ENCODE measurements at regions of chr2 and their contacts with region 1.

Region 1: DNA sequence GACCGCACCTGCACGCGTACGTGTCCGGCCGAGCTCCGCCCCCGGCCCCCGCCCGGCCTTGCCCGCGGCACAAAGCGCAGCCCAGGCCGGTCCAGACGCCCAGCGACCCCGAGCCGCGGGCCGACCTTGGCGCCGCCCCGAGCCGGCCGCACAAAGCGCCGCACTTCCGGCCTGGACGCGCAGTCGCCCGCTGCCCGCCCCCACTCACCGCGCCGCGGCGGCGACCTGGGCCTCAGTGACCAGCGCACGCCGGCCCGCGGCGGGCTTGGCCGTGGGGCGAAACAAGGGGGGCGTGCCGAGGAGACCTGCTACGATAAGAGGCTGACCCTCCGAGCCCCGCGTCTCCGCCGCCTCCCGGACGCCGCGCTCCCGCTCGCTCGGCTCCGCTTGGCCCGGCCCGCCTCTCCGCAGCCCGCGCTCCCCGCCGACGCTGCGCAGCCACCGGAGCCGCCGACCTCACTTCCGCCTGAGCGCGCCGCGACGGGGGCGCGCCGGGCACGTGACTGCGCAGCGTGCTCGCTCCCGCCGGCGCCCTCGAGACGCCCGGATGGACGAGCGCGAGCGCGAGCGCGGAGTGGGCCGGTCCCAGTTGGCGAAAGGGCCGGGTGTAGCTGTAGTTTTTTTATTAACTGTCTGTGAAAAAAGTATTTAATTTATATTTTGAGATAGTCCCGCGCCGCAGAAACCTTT is at the start of gene FAM168B:
- DNase-seq: peak; percentile 82 to 96 (median 88)
- ATAC-seq: peak; percentile 76
- H3K4me3 ChIP-seq: peak within 1 kb of the TSS; percentile 72 to 98
- H3K4me3 Mint-ChIP-seq: peak within 1 kb of the TSS; percentile 90
- H3K27ac ChIP-seq: peak within 1 kb of the TSS; percentile 89 to 94
- H3K27ac Mint-ChIP-seq: peak within 1 kb of the TSS; percentile 93
- H3K4me1 ChIP-seq: peaks cover 16% of the 10 kb centered on the region
- H3K4me1 Mint-ChIP-seq: peaks cover 26% of the 10 kb centered on the region
- H3K27me3 ChIP-seq: no peaks in the 10 kb centered on the region
- H3K27me3 Mint-ChIP-seq: no peaks in the 10 kb centered on the region
- CTCF ChIP-seq: no peak
- total RNA-seq, gene FAM168B: 87.3 to 91.7 TPM

Region 2: DNA sequence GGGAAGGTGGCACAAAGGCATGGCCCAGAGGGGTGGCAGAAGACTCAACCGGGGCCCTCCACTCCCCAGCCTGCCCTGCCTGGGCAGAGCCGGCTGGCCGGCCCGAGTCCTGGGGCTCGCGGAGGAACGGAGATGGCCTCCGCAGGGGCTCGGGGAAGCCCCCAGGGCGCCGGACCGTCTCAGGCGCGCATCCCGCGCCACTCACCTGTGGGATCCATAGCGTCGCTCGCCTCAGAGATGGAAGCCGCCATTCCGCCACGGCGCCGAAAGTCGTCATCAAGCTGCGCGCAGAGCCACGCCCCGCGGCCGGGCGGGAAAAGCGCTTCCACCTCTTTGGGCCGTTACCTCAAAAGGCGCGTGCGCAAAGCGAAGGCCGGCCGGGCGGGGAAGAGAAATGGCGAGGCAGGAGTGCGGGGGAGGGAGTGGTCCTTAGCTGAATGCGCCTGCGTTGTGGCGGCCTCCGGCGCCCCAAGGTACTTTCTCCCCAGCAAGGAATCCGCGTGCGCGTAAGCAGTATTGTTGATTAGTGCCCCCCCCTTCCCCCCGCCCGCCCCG is 911.7 kb before region 1 on chr2 and contains the start of gene SMPD4:
- CTCF ChIA-PET with region 1: no interaction called
- POLR2A ChIA-PET with region 1: no interaction called
- intact Hi-C with region 1: loop called in 1 of 2 experiments (anchors 5 kb)
- DNase-seq: peak; percentile 96 to 99 (median 98)
- ATAC-seq: peak; percentile 78
- H3K4me3 ChIP-seq: peak within 1 kb of the TSS; percentile 63 to 86
- H3K4me3 Mint-ChIP-seq: peak within 1 kb of the TSS; percentile 92
- H3K27ac ChIP-seq: peak within 1 kb of the TSS; percentile 81 to 89
- H3K27ac Mint-ChIP-seq: peak within 1 kb of the TSS; percentile 95
- H3K4me1 ChIP-seq: peaks cover 22% of the 10 kb centered on the region
- H3K4me1 Mint-ChIP-seq: peaks cover 27% of the 10 kb centered on the region
- H3K27me3 ChIP-seq: no peaks in the 10 kb centered on the region
- H3K27me3 Mint-ChIP-seq: no peaks in the 10 kb centered on the region
- CTCF ChIP-seq: no peak
- total RNA-seq, gene SMPD4: 108 to 114 TPM

Region 3: GRCh38 chr2:130727286-130728018 is 365.7 kb before region 1 on chr2:
- CTCF ChIA-PET with region 1: no interaction called
- POLR2A ChIA-PET with region 1: no interaction called
- intact Hi-C with region 1: loop called in 1 of 2 experiments (anchors 5 kb)
- DNase-seq: peak; percentile 81 to 94 (median 89)
- ATAC-seq: peak; percentile 96
- H3K4me3 ChIP-seq: peak overlapping the region; percentile 72 to 81
- H3K4me3 Mint-ChIP-seq: peak overlapping the region; percentile 84
- H3K27ac ChIP-seq: peak overlapping the region; percentile 66 to 85
- H3K27ac Mint-ChIP-seq: peak overlapping the region; percentile 81
- H3K4me1 ChIP-seq: peaks cover 16% of the 10 kb centered on the region
- H3K4me1 Mint-ChIP-seq: peaks cover 15% of the 10 kb centered on the region
- H3K27me3 ChIP-seq: no peaks in the 10 kb centered on the region
- H3K27me3 Mint-ChIP-seq: no peaks in the 10 kb centered on the region
- CTCF ChIP-seq: no peak

Region 4: DNA sequence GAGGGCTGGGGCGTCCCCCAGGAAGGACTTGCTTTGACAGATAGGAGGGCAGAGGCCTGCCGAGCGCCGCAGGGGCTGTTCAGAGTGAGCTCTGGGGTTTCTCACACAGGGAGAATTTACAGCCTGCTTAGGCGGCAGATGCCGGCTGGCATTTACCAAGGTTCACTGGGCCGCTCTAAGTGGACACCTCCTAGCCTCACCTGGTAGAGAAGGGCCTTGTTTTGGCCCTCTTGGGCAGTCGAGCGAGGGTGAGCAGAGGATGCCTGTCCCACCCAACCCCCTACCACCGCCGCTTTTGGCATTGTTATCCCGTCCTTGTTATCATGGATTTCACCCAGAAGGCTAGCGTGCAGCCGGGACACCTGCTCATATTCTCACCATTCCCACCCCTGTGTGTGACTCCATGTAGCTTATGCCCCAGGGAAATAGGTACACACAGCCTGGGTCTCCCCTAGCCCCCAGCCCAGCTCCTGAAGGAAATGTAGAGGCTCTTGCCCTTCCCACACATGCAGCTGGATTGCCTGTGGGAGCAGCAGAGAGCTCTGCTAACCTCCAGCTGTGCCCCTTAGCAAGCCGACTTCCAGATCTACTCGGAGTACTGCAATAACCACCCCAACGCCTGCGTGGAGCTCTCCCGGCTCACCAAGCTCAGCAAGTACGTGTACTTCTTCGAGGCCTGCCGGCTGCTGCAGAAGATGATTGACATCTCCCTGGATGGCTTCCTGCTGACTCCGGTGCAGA is 52.3 kb before region 1 on chr2:
- CTCF ChIA-PET with region 1: no interaction called
- POLR2A ChIA-PET with region 1: interaction called, 30 read pairs
- intact Hi-C with region 1: loop called in 1 of 2 experiments (anchors 2 kb)
- DNase-seq: peak in 5 of 9 experiments; percentile 27 to 57 (median 40)
- ATAC-seq: peak; percentile 53
- H3K4me3 ChIP-seq: peak overlapping the region; percentile 67 to 68
- H3K4me3 Mint-ChIP-seq: peak overlapping the region; percentile 93
- H3K27ac ChIP-seq: peak overlapping the region; percentile 46 to 56
- H3K27ac Mint-ChIP-seq: peak overlapping the region; percentile 86
- H3K4me1 ChIP-seq: peaks cover 33% of the 10 kb centered on the region
- H3K4me1 Mint-ChIP-seq: peaks cover 56% of the 10 kb centered on the region
- H3K27me3 ChIP-seq: no peaks in the 10 kb centered on the region
- H3K27me3 Mint-ChIP-seq: no peaks in the 10 kb centered on the region
- CTCF ChIP-seq: no peak

Region 5: DNA sequence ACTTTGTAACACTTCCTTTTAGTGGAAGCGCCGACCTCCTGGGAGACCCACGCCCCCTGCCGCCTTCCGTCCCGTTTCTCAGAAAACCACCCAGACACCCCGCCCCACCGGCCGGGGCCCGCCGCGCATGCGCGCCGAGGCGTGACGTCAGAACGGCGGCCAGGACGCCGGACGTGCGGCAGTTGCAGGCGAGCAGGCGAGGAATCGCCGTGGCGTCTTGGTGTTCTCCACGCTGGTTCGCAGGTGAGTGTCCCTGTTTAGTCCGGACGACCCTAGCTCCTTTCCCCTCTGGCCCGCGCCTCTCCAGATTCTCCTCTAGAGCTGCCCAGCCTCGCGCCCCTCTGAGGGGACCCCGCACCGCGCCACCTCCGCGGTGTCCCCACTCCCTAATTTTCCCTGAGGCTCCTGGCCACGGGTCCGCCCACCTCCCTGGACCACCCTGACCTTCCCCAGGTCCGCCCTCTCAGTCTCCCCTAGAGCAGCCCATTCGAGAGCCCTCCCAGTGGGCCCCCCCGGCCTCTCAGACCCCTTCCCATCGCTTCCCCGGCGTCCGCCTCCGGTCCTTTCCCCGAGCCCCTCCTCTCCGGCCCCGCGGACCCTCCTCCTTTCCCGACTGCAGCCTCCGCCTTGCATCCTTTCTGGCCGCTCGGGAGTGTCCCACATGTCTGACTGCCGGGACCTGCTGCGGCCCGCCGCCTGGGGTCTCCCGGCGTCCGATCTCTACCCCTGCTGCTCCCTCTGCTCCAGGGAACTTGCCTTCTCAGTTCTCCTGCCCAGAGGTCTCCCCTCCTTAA is 12.2 kb after region 1 on chr2 and contains the start of gene PLEKHB2:
- CTCF ChIA-PET with region 1: interaction called, 6 read pairs
- POLR2A ChIA-PET with region 1: interaction called, 45 read pairs
- intact Hi-C with region 1: loop called (anchors 1 kb)
- DNase-seq: peak; percentile 86 to 97 (median 93)
- ATAC-seq: peak; percentile 61
- H3K4me3 ChIP-seq: peak within 1 kb of the TSS; percentile 83 to 95
- H3K4me3 Mint-ChIP-seq: peak within 1 kb of the TSS; percentile 95
- H3K27ac ChIP-seq: peak within 1 kb of the TSS; percentile 91 to 95
- H3K27ac Mint-ChIP-seq: peak within 1 kb of the TSS; percentile 96
- H3K4me1 ChIP-seq: peaks cover 35% of the 10 kb centered on the region
- H3K4me1 Mint-ChIP-seq: peaks cover 58% of the 10 kb centered on the region
- H3K27me3 ChIP-seq: no peaks in the 10 kb centered on the region
- H3K27me3 Mint-ChIP-seq: no peaks in the 10 kb centered on the region
- CTCF ChIP-seq: no peak
- total RNA-seq, gene PLEKHB2: 89.8 to 90.1 TPM

Region 6: DNA sequence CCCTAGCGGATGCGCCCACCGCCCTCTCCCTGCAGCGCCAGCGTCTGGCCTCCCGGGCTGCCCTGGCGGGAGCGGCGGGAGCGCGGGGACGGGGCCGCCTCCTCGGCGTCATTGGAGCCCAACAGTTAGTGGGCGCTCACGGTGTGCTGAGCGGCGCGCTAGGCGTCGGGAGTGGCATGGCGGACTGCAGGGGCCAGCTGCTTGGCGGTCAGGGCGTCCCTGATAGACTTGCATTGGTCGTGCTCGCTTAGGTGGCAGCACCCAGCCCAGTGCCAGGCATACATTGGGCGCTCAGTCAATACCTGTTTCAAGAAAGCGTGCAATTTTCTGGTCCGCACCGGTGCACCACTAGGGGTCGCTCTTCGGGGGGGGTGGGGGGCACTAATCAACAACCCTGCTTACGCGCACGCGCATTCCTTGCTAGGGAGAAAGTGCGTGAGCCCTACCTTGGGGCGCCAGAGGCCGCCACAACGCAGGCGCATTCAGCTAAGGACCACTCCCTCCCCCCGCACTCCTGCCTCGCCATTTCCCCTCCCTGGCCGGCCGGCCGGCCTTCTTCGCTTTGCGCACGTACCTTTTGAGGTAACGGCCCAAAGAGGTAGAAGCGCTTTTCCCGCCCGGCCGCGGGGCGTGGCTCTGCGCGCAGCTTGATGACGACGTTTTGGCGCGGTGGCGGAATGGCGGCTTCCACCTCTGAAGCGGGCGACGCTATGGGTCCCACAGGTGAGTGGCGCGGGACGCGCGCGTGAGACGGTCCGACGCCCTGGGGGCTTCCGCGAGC is 399.5 kb after region 1 on chr2:
- CTCF ChIA-PET with region 1: no interaction called
- POLR2A ChIA-PET with region 1: interaction called, 3 read pairs
- intact Hi-C with region 1: loop called in 1 of 2 experiments (anchors 1 kb)
- DNase-seq: peak; percentile 86 to 98 (median 93)
- ATAC-seq: peak; percentile 73
- H3K4me3 ChIP-seq: peak overlapping the region; percentile 86 to 87
- H3K4me3 Mint-ChIP-seq: peak overlapping the region; percentile 95
- H3K27ac ChIP-seq: peak overlapping the region; percentile 95 to 97
- H3K27ac Mint-ChIP-seq: peak overlapping the region; percentile 98
- H3K4me1 ChIP-seq: peaks cover 19% of the 10 kb centered on the region
- H3K4me1 Mint-ChIP-seq: peaks cover 49% of the 10 kb centered on the region
- H3K27me3 ChIP-seq: no peaks in the 10 kb centered on the region
- H3K27me3 Mint-ChIP-seq: no peaks in the 10 kb centered on the region
- CTCF ChIP-seq: peak; percentile 88

Region 7: GRCh38 chr2:131801210-131801744 is 708.1 kb after region 1 on chr2:
- CTCF ChIA-PET with region 1: no interaction called
- POLR2A ChIA-PET with region 1: no interaction called
- intact Hi-C with region 1: loop called in 1 of 2 experiments (anchors 5 kb)
- DNase-seq: peak in 2 of 9 experiments; percentile 12 to 14
- ATAC-seq: no peak
- H3K4me3 ChIP-seq: no peak overlapping the region
- H3K4me3 Mint-ChIP-seq: peak overlapping the region; percentile 5
- H3K27ac ChIP-seq: no peak overlapping the region
- H3K27ac Mint-ChIP-seq: no peak overlapping the region
- H3K4me1 ChIP-seq: no peaks in the 10 kb centered on the region
- H3K4me1 Mint-ChIP-seq: peaks cover 3% of the 10 kb centered on the region
- H3K27me3 ChIP-seq: peaks cover 0 to 3% of the 10 kb centered on the region in 2 experiments
- H3K27me3 Mint-ChIP-seq: peaks cover 8% of the 10 kb centered on the region
- CTCF ChIP-seq: no peak